Right lobe of liver (tissue), 6 donors: ENCODE measurements at regions of chr10 and their contacts with region 1.

Region 1: DNA sequence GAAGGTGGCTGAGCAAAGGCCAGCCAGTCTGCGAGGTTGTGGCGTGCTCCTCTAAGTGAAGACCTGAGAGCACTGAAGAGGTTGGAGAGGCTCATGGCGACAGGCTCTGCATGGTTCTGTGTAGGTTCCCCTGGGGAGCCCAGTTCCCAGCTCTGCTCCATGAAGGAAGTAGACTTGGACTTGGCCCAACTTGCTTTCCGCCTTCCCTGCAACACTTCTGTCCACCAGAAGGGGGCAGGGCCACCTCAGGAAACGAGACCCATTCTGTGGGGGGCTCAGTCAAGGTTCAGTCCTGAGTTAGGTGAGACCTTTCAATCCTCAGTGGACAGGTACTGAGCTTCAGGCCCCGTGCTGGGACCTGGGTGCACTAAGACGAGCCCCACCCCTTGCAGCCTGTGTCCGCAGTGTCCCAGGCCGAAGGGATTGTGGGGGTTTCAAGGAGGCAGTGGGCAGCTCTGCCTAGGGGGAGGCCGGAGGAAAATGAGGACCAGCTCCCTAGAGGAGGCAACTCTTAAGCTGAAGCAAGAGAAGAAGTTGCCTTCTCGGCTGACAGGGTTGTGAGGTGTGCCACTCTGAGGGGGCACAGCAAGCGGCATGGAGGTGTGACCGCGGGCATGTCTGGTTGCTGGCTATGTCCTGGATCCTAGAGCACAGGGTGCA is 15.0 kb upstream of the PCBD1 start:
- DNase-seq: peak; percentile 40 to 66 (median 57)
- ATAC-seq: peak; percentile 71 to 86 (median 82)
- H3K4me3 ChIP-seq: no peak overlapping the region
- H3K27ac ChIP-seq: no peak overlapping the region
- H3K4me1 ChIP-seq: no peaks in the 10 kb centered on the region
- H3K27me3 ChIP-seq: no peaks in the 10 kb centered on the region
- CTCF ChIP-seq: peak; percentile 72 to 90 (median 84)
- POLR2A ChIP-seq: no peak

Region 2: GRCh38 chr10:70549962-70550458 is 353.4 kb before region 1 on chr10:
- intact Hi-C with region 1: no loop called
- DNase-seq: peak in 1 of 3 donors; percentile 68
- ATAC-seq: peak; percentile 79 to 93 (median 90)
- H3K4me3 ChIP-seq: no peak overlapping the region
- H3K27ac ChIP-seq: no peak overlapping the region
- H3K4me1 ChIP-seq: no peaks in the 10 kb centered on the region
- H3K27me3 ChIP-seq: no peaks in the 10 kb centered on the region
- CTCF ChIP-seq: peak; percentile 74 to 91 (median 86)
- POLR2A ChIP-seq: no peak

Region 3: GRCh38 chr10:71212318-71213126 is 309.1 kb after region 1 on chr10 and contains the start of gene UNC5B:
- intact Hi-C with region 1: loop called in 1 of 2 experiments (anchors 10 kb)
- DNase-seq: peak; percentile 89 to 90 (median 90)
- ATAC-seq: peak; percentile 84 to 92 (median 87)
- H3K4me3 ChIP-seq: peak within 1 kb of the TSS; percentile 48 to 61 (median 50)
- H3K27ac ChIP-seq: peak within 1 kb of the TSS; percentile 10 to 26 (median 26)
- H3K4me1 ChIP-seq: peaks cover 0 to 16% (median 0%) of the 10 kb centered on the region in 4 donors
- H3K27me3 ChIP-seq: peaks cover 0 to 8% of the 10 kb centered on the region in 2 donors
- CTCF ChIP-seq: peak in 2 of 4 donors; percentile 36 to 41
- POLR2A ChIP-seq: peak; percentile 92
- total RNA-seq, gene UNC5B: 1.0 to 6.2 (median 2.1) TPM